AG04450 (cell line): ENCODE measurements at regions of chr3 and their contacts with region 1.

Region 1: GRCh38 chr3:152471814-152472671 is 203.3 kb downstream of the MBNL1 start:
- DNase-seq: no peak
- H3K4me3 ChIP-seq: no peak overlapping the region
- H3K27ac ChIP-seq: no peak overlapping the region
- H3K27me3 ChIP-seq: no peaks in the 10 kb centered on the region
- CTCF ChIP-seq: peak; percentile 62

Region 2: GRCh38 chr3:151452841-151453240 is 1019.2 kb before region 1 on chr3:
- CTCF ChIA-PET with region 1: no interaction called
- POLR2A ChIA-PET with region 1: no interaction called
- DNase-seq: no peak
- H3K4me3 ChIP-seq: no peak overlapping the region
- H3K27ac ChIP-seq: no peak overlapping the region
- H3K27me3 ChIP-seq: no peaks in the 10 kb centered on the region
- CTCF ChIP-seq: no peak

Region 3: DNA sequence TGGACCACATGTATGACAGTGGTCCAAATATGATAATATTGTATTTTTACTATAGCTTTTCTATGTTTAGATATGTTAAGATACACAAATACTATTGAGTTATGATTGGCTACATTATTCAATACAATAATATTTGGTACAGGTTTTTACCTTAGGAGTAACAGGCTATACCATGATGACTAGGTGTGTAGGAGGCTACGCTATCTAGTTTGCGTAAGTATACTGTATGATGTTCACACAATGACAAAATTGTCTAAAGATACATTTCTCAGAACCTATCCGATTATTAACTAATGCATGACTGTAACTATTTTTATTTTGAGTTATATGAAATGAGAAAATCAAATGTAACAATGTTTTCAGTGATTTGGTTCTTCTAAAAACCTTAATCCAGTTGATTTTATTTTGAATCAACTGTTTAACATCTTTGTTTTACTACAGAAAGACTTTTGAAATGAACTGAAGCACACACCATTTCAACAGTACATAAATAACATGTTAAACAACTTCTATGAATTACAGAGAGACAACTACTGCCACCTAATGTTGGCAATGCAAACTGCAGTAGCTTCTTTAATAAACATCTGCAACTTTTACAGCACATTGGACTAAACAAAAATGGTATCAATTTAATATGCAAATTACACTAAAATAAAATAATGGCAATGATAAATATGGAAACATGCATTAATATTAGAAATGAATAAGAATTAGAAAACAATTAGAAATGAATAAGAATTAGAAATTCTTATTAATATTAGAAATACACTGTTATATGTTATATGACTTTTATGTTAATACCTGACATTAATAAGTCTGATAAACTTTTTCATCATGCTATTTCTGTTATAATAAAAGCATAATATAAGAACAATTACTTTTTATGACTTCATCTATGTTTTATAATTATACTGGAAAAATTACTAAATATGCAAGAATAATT is 52.4 kb after region 1 on chr3:
- CTCF ChIA-PET with region 1: interaction called, 14 read pairs
- POLR2A ChIA-PET with region 1: no interaction called
- DNase-seq: peak; percentile 21
- H3K4me3 ChIP-seq: no peak overlapping the region
- H3K27ac ChIP-seq: no peak overlapping the region
- H3K27me3 ChIP-seq: no peaks in the 10 kb centered on the region
- CTCF ChIP-seq: peak; percentile 91

Region 4: GRCh38 chr3:152574461-152575079 is 102.5 kb after region 1 on chr3:
- CTCF ChIA-PET with region 1: interaction called, 23 read pairs
- POLR2A ChIA-PET with region 1: no interaction called
- DNase-seq: no peak
- H3K4me3 ChIP-seq: no peak overlapping the region
- H3K27ac ChIP-seq: no peak overlapping the region
- H3K27me3 ChIP-seq: no peaks in the 10 kb centered on the region
- CTCF ChIP-seq: peak; percentile 56